Adrenal gland (tissue), 19 donors: ENCODE measurements at regions of chr1 and their contacts with region 1.

Region 1: GRCh38 chr1:157154940-157155514 is 16.8 kb upstream of the ETV3 start:
- DNase-seq: peak; percentile 51 to 76 (median 69)
- H3K4me3 ChIP-seq: no peak overlapping the region
- H3K27ac ChIP-seq: peak overlapping the region in 1 of 5 donors; percentile 43
- H3K4me1 ChIP-seq: peaks cover 7 to 20% of the 10 kb centered on the region in 2 donors
- H3K27me3 ChIP-seq: no peaks in the 10 kb centered on the region
- CTCF ChIP-seq: no peak
- POLR2A ChIP-seq: no peak

Region 2: GRCh38 chr1:157090196-157090647 is 64.8 kb before region 1 on chr1:
- intact Hi-C with region 1: loop called (anchors 2 kb)
- DNase-seq: peak; percentile 84 to 96 (median 89)
- H3K4me3 ChIP-seq: no peak overlapping the region
- H3K27ac ChIP-seq: no peak overlapping the region
- H3K4me1 ChIP-seq: no peaks in the 10 kb centered on the region
- H3K27me3 ChIP-seq: no peaks in the 10 kb centered on the region
- CTCF ChIP-seq: peak; percentile 83 to 95 (median 92)
- POLR2A ChIP-seq: no peak